ENCODE measurements at regions of chr1 and their contacts with region 1.

Region 1: DNA sequence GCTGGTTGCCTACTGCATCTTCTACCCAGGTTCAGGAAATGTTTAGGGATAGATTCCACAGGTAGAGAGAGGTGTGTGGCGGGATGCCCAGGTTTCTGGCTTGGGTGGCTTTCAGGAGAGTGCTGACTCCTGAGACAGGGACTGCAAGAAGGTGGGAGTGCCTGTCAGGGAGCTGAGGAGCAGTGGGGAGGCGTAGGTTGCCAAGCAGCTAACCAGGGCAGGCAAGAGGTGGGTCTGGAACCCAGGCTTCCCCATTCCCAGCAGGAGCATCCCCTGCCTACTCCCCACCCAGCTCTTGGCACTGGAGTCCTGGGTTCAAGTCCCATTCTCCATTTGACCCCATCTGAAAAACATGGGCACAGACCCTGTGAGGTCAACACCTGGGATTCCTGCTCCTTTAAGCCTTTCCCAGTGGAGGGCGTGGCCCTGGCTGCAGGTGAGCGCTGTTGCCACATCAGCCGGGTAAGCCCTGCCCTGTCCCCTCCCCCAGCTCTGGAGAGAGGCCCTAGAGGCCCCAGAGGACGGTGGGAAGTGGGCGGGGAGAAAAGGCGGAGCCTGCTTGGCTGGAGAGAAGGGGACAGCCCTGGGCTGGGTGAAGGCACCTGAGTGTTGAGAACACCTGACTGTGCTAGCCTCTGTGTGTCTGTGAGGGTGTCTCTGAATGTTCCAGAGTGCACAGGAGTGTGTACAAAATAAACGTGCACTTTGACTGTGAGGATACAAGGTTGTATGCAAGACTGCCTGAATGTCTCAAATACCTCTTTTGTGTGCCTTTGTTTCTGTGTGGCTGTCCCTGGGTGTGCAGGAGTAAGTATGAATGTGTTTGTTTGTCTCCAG is 14.0 kb upstream of the SYNC start:
- DNase-seq: no peak
- H3K4me3 ChIP-seq: no peak overlapping the region
- H3K27ac ChIP-seq: no peak overlapping the region
- H3K4me1 ChIP-seq: peaks cover 0 to 7% (median 0%) of the 10 kb centered on the region in 4 donors
- H3K27me3 ChIP-seq: no peaks in the 10 kb centered on the region
- CTCF ChIP-seq: no peak
- EP300 ChIP-seq: no peak
- POLR2A ChIP-seq: peak in 1 of 2 donors; percentile 39

Region 2: GRCh38 chr1:32773018-32773763 is 56.7 kb after region 1 on chr1:
- intact Hi-C with region 1: loop called (anchors 1 kb)
- DNase-seq: peak; percentile 92
- H3K4me3 ChIP-seq: no peak overlapping the region
- H3K27ac ChIP-seq: no peak overlapping the region
- H3K4me1 ChIP-seq: peaks cover 0 to 7% (median 5%) of the 10 kb centered on the region in 4 donors
- H3K27me3 ChIP-seq: no peaks in the 10 kb centered on the region
- CTCF ChIP-seq: peak; percentile 75 to 93 (median 88)
- EP300 ChIP-seq: no peak
- POLR2A ChIP-seq: no peak

Region 3: DNA sequence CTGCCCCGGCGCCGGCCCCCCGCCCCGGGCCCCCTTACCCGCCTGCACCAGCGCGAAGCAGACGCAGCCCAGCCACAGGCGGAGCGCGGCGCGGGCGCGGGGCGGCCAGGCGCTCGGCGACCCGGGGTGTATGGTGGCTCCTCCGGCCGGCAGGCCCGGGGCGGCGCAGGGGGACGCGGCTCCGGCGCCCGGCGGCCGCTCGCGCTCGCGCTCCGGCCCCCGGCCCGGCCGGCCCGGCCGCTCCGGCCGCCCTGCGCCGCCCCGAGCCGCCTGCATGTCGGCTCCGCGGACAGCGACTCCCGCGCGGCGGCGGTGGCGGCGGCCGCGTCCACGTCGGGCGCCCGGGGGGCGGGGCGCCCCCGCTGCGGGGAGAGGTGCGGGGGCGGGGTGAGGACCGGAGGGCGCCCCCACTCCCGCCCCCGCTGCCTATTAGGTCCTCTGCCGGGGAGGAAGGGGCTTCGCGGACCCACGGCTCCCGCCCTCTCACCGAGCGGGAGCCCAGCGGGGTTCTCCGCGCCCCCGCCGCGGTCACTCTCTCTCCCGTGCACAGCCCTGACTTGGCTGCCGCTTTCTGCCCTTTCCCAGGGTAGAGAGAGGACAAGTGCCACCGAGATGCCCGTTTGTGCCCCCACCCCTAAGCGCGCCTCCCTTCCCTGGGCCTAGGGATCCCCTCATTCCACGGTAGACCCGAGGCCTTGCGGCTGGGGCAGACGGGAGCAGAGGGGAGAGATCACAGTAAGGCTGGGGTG is 154.3 kb after region 1 on chr1 and contains the start of gene FNDC5:
- intact Hi-C with region 1: loop called (anchors 5 kb)
- DNase-seq: no peak
- H3K4me3 ChIP-seq: peak within 1 kb of the TSS; percentile 28 to 56 (median 48)
- H3K27ac ChIP-seq: peak within 1 kb of the TSS in 3 of 4 donors; percentile 1 to 48 (median 28)
- H3K4me1 ChIP-seq: peaks cover 0 to 28% (median 14%) of the 10 kb centered on the region in 4 donors
- H3K27me3 ChIP-seq: peaks cover 0 to 4% (median 0%) of the 10 kb centered on the region in 3 donors
- CTCF ChIP-seq: no peak
- EP300 ChIP-seq: no peak
- POLR2A ChIP-seq: no peak
- total RNA-seq, gene FNDC5: 0.41 to 10.2 (median 1.6) TPM

Measured in sigmoid colon (tissue), 7 donors.